ENCODE measurements at regions of chr13 and their contacts with region 1.

Region 1: DNA sequence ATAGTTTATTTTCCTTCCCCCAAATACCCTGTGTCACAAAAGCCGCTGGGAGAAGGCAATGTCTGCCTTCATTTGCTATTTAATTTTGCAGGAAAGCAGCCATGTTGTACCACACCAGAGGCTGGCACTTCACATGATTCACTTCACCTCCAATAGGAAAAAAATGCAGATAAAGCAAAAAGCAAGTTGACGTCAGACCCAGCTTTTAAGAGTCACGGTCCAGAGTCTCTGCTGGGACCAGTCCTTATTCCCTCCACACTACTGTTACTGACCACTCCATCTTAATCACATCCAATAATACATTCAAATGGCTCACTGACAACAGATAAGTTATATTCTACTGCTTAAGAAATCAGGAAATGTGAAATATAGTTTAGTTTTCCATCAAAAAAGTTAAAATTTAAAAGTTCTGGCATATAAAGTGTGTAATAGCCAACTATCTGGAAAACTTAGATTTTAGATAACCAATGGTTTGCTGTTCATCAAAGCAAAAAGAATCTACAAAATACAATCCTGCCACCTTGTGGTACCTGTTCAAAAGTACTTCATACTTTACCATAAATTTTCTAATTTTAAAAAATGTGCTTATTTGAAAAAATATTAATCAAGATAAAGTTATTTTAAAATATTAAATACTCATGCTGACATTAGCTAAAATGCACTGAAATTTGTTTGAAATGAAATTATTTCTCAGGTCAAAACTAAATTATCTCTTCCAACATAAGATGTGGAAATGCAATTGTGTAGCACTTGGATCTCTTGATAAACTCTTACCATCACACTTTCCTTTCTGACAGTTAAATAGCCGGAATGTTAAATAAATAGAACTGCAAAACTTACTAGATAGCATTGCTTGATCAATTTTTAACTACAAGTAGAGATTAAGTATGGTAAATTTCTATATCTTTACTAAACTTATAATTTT is 97.3 kb downstream of the SERP2 start:
- DNase-seq: no peak
- H3K4me3 ChIP-seq: no peak overlapping the region
- H3K27ac ChIP-seq: peak overlapping the region in 1 of 59 donors; percentile 10
- H3K27me3 ChIP-seq: no peaks in the 10 kb centered on the region
- CTCF ChIP-seq: peak; percentile 54 to 84 (median 68)

Region 2: GRCh38 chr13:43905435-43906031 is 565.4 kb before region 1 on chr13:
- intact Hi-C with region 1: loop called in 1 of 2 experiments (anchors 10 kb)
- DNase-seq: peak in 2 of 10 donors; percentile 35 to 51
- H3K4me3 ChIP-seq: no peak overlapping the region
- H3K27ac ChIP-seq: no peak overlapping the region
- H3K27me3 ChIP-seq: no peaks in the 10 kb centered on the region
- CTCF ChIP-seq: peak; percentile 81 to 98 (median 92)

Measured in dorsolateral prefrontal cortex (tissue), 120 donors.